HEK293 (cell line): ENCODE measurements at regions of chr1 and their contacts with region 1.

Region 1: DNA sequence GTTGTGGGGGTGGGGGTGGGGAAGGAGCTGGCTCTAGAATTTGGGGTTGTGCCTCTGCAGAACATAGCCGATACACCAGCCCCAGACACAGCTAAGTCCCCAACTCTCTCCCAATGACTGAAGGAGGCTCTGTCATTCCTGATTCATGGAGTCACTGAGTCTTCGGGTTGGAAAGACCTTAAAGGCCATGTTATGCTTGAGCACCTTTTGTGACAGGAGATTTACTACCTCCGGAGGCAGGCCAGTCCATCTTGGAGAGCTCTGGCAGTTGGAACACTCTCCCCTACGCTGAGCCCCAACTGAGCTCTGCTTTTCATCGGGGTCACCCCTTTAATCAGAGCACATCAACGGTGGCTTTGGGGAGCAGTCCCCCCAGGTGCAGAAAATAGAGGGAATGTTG is 284.4 kb upstream of the GJB5 start:
- H3K4me3 ChIP-seq: no peak overlapping the region
- H3K27ac ChIP-seq: no peak overlapping the region
- H3K4me1 ChIP-seq: no peaks in the 10 kb centered on the region
- CTCF ChIP-seq: no peak

Region 2: DNA sequence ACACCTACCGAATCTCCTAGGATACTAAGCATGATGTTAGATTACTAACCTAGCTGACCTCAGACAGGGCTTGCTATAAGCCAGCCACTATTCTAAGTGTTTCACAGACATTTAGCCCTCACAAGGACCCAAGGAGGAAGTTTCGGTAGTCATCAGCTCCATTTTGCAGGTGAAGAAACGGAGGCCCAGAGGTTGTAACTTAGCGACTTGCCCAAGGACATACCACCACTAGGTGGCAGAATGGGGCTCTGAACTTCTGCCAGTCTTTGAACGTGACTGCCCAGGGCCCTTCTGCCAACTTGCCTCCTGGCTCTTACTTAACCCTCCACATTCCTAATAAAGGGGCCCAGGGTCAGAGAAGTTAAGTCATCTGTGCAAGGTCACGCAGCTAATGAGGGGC is 10.2 kb before region 1 on chr1:
- CTCF ChIA-PET with region 1: interaction called, 11 read pairs
- POLR2A ChIA-PET with region 1: no interaction called
- H3K4me3 ChIP-seq: no peak overlapping the region
- H3K27ac ChIP-seq: no peak overlapping the region
- H3K4me1 ChIP-seq: no peaks in the 10 kb centered on the region
- CTCF ChIP-seq: no peak